ENCODE measurements at regions of chr21 and their contacts with region 1.

Region 1: DNA sequence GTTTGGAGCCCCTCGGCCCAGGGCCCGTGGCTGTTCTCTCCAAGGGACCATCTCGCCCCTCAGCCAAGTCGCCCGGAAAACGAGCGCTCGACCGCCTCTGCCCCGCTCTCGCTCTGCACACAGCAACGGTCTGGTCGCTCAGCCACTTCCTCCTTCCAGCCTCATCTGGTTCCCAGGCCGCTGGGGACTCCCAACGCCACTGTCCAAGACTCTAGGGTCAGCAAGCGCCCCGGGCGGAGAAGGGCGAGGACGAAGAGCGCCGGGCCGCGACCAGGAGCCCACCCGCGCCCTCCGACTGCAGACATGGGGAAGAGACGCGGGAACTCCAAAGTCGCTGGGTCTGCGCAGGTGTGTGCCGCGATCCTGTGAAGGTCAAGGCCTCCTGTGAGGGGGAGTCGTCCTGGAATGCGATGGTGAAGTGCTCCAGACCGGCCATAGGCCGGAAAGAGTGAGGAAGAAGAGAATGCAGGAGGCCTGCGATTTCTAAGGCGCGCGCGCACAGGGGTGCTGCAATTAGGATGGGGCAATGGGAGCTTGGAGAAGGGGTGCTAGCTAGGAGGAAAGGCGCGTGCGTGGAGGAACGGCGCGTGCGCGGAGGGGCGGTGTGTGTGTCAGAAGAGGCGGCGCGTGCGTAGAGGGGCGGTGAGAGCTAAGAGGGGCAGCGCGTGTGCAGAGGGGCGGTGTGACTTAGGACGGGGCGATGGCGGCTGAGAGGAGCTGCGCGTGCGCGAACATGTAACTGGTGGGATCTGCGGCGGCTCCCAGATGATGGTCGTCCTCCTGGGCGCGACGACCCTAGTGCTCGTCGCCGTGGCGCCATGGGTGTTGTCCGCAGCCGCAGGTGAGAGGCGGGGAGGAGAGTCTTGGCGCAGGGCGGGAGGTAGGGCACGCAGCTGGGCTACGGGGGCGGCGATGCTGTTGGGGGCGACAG is at the start of gene IFNAR1:
- DNase-seq: peak; percentile 98
- H3K4me3 Mint-ChIP-seq: no peak within 1 kb of the TSS
- H3K27ac Mint-ChIP-seq: no peak within 1 kb of the TSS
- H3K4me1 Mint-ChIP-seq: peaks cover 8% of the 10 kb centered on the region
- H3K27me3 Mint-ChIP-seq: no peaks in the 10 kb centered on the region
- CTCF ChIP-seq: no peak
- total RNA-seq, gene IFNAR1: 30.0 and 35.5 TPM in 2 replicates

Region 2: GRCh38 chr21:33229784-33230544 is 94.6 kb before region 1 on chr21 and contains the start of gene IFNAR2:
- CTCF ChIA-PET with region 1: no interaction called
- POLR2A ChIA-PET with region 1: interaction called, 21 read pairs
- intact Hi-C with region 1: loop called (anchors 10 kb)
- DNase-seq: peak; percentile 54
- H3K4me3 Mint-ChIP-seq: peak within 1 kb of the TSS; percentile 82
- H3K27ac Mint-ChIP-seq: no peak within 1 kb of the TSS
- H3K4me1 Mint-ChIP-seq: peaks cover 23% of the 10 kb centered on the region
- H3K27me3 Mint-ChIP-seq: no peaks in the 10 kb centered on the region
- CTCF ChIP-seq: no peak
- total RNA-seq, gene IFNAR2: 7.3 and 8.8 TPM in 2 replicates

Region 3: GRCh38 chr21:33286600-33287456 is 37.7 kb before region 1 on chr21:
- CTCF ChIA-PET with region 1: no interaction called
- POLR2A ChIA-PET with region 1: interaction called, 23 read pairs
- intact Hi-C with region 1: loop called (anchors 2 kb)
- DNase-seq: peak; percentile 92
- H3K4me3 Mint-ChIP-seq: peak overlapping the region; percentile 12
- H3K27ac Mint-ChIP-seq: peak overlapping the region; percentile 96
- H3K4me1 Mint-ChIP-seq: peaks cover 30% of the 10 kb centered on the region
- H3K27me3 Mint-ChIP-seq: no peaks in the 10 kb centered on the region
- CTCF ChIP-seq: no peak

Region 4: GRCh38 chr21:33360881-33361602 is 36.5 kb after region 1 on chr21:
- CTCF ChIA-PET with region 1: interaction called, 4 read pairs
- POLR2A ChIA-PET with region 1: interaction called, 14 read pairs
- intact Hi-C with region 1: no loop called
- DNase-seq: peak; percentile 81
- H3K4me3 Mint-ChIP-seq: peak overlapping the region; percentile 53
- H3K27ac Mint-ChIP-seq: peak overlapping the region; percentile 16
- H3K4me1 Mint-ChIP-seq: peaks cover 14% of the 10 kb centered on the region
- H3K27me3 Mint-ChIP-seq: no peaks in the 10 kb centered on the region
- CTCF ChIP-seq: peak; percentile 86

Region 5: GRCh38 chr21:33428669-33429068 is 104.1 kb after region 1 on chr21:
- CTCF ChIA-PET with region 1: no interaction called
- POLR2A ChIA-PET with region 1: interaction called, 22 read pairs
- intact Hi-C with region 1: no loop called
- DNase-seq: peak; percentile 99
- H3K4me3 Mint-ChIP-seq: peak overlapping the region; percentile 60
- H3K27ac Mint-ChIP-seq: peak overlapping the region; percentile 93
- H3K4me1 Mint-ChIP-seq: peaks cover 17% of the 10 kb centered on the region
- H3K27me3 Mint-ChIP-seq: no peaks in the 10 kb centered on the region
- CTCF ChIP-seq: no peak

Region 6: GRCh38 chr21:33542640-33543504 is 218.3 kb after region 1 on chr21 and contains the start of gene SON:
- CTCF ChIA-PET with region 1: no interaction called
- POLR2A ChIA-PET with region 1: interaction called, 11 read pairs
- intact Hi-C with region 1: no loop called
- DNase-seq: peak; percentile 99
- H3K4me3 Mint-ChIP-seq: peak within 1 kb of the TSS; percentile 81
- H3K27ac Mint-ChIP-seq: peak within 1 kb of the TSS; percentile 99
- H3K4me1 Mint-ChIP-seq: peaks cover 17% of the 10 kb centered on the region
- H3K27me3 Mint-ChIP-seq: no peaks in the 10 kb centered on the region
- CTCF ChIP-seq: no peak
- total RNA-seq, gene SON: 289 and 303 TPM in 2 replicates

Measured in MCF 10A (cell line).